Heart left ventricle (tissue), 16 donors: ENCODE measurements at regions of chr20 and their contacts with region 1.

Region 1: DNA sequence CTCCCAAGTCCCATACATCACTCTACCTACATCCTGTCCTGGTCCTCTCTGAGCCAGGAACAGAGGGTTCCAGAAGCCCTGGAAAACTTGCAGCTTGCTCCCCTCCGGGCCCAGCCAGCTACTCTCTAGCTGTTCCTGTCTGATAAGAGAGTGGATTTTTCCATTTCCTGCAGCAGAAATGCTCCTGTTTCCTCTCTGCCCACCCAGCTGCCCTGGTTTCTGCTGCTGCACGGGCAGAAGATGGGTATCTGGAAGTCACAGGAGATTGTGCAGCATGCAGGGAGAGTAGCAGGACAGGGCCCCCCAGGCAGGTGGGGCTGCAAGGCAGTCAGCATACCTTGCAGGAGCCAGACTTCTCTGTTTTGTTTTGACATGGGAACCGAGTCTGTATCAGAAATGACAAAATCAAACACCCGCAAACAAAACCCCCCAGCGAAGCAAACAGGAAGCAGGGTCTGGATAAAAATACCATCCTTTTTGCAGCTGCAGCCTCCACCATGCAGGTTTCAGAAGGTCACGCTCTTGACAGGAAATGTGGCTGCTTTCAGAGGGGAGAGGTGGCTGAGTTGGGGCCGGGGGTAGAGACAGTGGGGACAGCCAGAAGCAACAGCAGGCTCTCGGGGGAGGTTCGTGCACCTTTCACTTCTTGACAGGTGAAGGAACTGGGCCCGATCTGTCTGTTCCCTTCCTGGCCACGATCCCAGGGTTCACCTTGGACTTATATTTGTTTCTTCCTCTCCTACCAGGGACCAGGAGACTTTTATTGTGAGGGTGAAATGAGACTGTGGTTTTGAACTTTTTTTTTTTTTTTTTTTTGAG is 50.8 kb upstream of the FAM83D start:
- DNase-seq: peak in 1 of 5 donors; percentile 37
- ATAC-seq: peak; percentile 61 to 83 (median 70)
- H3K4me3 ChIP-seq: peak overlapping the region in 1 of 12 donors; percentile 25
- H3K27ac ChIP-seq: peak overlapping the region in 10 of 12 donors; percentile 16 to 77 (median 54)
- H3K4me1 ChIP-seq: peaks cover 0 to 56% (median 28%) of the 10 kb centered on the region in 12 donors
- H3K27me3 ChIP-seq: peaks cover 0 to 39% (median 3%) of the 10 kb centered on the region in 9 donors
- CTCF ChIP-seq: no peak
- POLR2A ChIP-seq: no peak

Region 2: GRCh38 chr20:38799203-38799602 is 76.2 kb before region 1 on chr20:
- intact Hi-C with region 1: loop called in 3 of 10 experiments (anchors 5 to 10 kb)
- DNase-seq: peak in 3 of 5 donors; percentile 29 to 57 (median 43)
- ATAC-seq: peak; percentile 58 to 91 (median 62)
- H3K4me3 ChIP-seq: no peak overlapping the region
- H3K27ac ChIP-seq: peak overlapping the region in 9 of 12 donors; percentile 37 to 83 (median 72)
- H3K4me1 ChIP-seq: peaks cover 0 to 28% (median 11%) of the 10 kb centered on the region in 12 donors
- H3K27me3 ChIP-seq: no peaks in the 10 kb centered on the region
- CTCF ChIP-seq: no peak
- POLR2A ChIP-seq: no peak

Region 3: GRCh38 chr20:38805502-38805957 is 69.9 kb before region 1 on chr20 and contains the start of gene PPP1R16B:
- intact Hi-C with region 1: loop called in 4 of 10 experiments (anchors 5 to 10 kb)
- DNase-seq: peak; percentile 62 to 85 (median 70)
- ATAC-seq: peak; percentile 78 to 91 (median 86)
- H3K4me3 ChIP-seq: peak within 1 kb of the TSS; percentile 68 to 98 (median 76)
- H3K27ac ChIP-seq: peak within 1 kb of the TSS; percentile 69 to 90 (median 86)
- H3K4me1 ChIP-seq: peaks cover 0 to 55% (median 31%) of the 10 kb centered on the region in 12 donors
- H3K27me3 ChIP-seq: peaks cover 3 to 33% (median 17%) of the 10 kb centered on the region in 9 donors
- CTCF ChIP-seq: no peak
- POLR2A ChIP-seq: peak in 1 of 2 donors; percentile 59
- total RNA-seq, gene PPP1R16B: 3.4 to 11.8 (median 6.9) TPM

Region 4: GRCh38 chr20:38812182-38812581 is 63.2 kb before region 1 on chr20:
- intact Hi-C with region 1: loop called in 4 of 10 experiments (anchors 5 to 10 kb)
- DNase-seq: no peak
- ATAC-seq: peak; percentile 46 to 79 (median 52)
- H3K4me3 ChIP-seq: no peak overlapping the region
- H3K27ac ChIP-seq: peak overlapping the region in 8 of 12 donors; percentile 12 to 62 (median 48)
- H3K4me1 ChIP-seq: peaks cover 0 to 62% (median 33%) of the 10 kb centered on the region in 12 donors
- H3K27me3 ChIP-seq: peaks cover 0 to 17% (median 3%) of the 10 kb centered on the region in 9 donors
- CTCF ChIP-seq: no peak
- POLR2A ChIP-seq: no peak

Region 5: DNA sequence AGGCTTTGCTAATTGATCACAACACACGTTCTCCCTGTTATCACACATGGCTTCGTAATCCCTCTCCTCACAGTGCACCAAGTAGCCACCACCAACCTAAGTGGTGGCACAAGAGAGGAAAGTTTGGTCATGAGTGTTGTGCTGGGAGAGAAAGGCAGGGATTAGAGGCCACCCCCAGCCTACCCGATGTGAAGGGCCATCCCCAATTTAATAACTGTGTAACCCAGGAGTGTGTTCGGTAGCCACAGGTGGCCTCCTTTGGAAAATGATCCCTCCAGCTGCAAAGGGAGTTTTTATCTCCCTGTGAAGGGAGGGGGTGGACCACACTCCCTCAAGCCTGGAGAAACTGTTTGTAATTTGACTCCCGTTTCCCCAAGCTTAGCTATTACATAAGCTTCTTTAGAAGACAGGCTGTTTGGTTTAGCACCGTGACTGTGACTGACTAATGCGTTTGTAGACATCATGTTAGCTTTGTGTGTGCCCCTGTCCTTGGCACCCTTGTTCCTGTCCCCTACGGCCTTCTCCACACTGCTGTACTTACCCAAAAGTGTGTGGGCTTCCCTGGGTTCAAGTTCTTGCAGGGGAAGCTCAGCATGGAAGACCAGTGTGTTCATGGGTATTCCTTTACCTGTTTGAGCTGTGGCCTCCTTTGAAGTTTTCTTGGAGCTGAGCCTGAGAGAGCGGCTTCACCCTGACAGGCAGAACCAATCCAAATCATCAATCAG is 49.3 kb before region 1 on chr20:
- intact Hi-C with region 1: loop called in 2 of 10 experiments (anchors 5 kb)
- DNase-seq: no peak
- ATAC-seq: no peak
- H3K4me3 ChIP-seq: no peak overlapping the region
- H3K27ac ChIP-seq: peak overlapping the region in 1 of 12 donors; percentile 9
- H3K4me1 ChIP-seq: peaks cover 0 to 81% (median 38%) of the 10 kb centered on the region in 12 donors
- H3K27me3 ChIP-seq: peaks cover 0 to 4% (median 0%) of the 10 kb centered on the region in 9 donors
- CTCF ChIP-seq: no peak
- POLR2A ChIP-seq: no peak